SK-N-SH (cell line): ENCODE measurements at regions of chr7 and their contacts with region 1.

Region 1: DNA sequence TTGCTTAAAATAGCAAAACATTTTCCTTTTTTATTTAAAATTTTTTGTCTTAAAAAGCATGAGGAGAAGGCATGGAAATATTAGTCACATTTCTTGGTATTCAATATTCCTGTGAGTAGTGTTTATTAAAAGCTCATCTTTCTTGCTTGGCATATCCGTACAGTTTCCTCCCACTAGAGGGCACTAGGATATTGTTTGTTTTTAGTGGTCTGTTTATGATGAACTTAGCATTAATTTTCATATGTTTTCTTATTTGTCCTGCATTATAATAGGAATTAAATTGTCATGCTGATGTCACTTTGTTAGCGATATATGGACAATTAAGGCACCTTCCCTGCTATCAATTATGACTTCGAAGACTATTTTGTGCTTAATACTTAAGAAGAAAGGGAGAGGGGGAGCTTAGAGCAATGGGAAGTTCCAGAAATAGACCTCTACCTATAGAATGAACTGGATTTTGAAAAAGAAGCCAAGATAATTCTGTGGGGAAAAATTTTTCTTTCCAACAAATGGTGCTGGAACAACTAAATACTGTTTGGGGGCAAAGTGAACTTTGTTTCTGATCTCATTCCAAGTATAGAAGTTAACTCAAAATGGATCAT is 91.0 kb upstream of the STRIP2 start:
- DNase-seq: peak; percentile 64
- H3K4me3 ChIP-seq: no peak overlapping the region
- H3K27ac ChIP-seq: no peak overlapping the region
- H3K4me1 ChIP-seq: peaks cover 0 to 6% of the 10 kb centered on the region in 2 experiments; a peak in 1 of 4 replicates
- H3K27me3 ChIP-seq: no peaks in the 10 kb centered on the region
- CTCF ChIP-seq: peak; percentile 98
- EP300 ChIP-seq: no peak
- RAD21 ChIP-seq: peak; percentile 81

Region 2: GRCh38 chr7:128849804-128850490 is 493.3 kb before region 1 on chr7:
- CTCF ChIA-PET with region 1: no interaction called
- POLR2A ChIA-PET with region 1: no interaction called
- DNase-seq: no peak
- H3K4me3 ChIP-seq: no peak overlapping the region
- H3K27ac ChIP-seq: no peak overlapping the region
- H3K4me1 ChIP-seq: no peaks in the 10 kb centered on the region
- H3K27me3 ChIP-seq: no peaks in the 10 kb centered on the region
- CTCF ChIP-seq: no peak
- EP300 ChIP-seq: no peak
- RAD21 ChIP-seq: no peak

Region 3: DNA sequence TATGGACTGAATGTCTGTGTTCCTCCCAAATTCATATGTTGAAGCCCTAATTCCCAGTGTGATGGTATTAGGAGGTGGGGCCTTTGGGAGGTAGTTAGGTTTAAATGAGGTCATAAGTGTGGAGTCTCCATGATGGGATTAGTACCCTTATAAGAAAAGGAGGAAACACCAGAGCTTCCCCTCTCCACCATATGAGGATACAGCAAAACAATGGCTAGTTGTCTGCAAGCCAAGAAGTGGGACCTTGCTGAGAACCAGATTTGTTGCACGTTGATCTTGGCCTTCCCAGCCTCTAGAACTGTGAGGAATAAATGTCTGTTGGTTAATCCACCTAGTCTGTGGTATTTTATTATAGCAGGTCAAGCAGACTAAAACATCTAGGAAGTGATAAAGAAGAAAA is 16.1 kb before region 1 on chr7:
- CTCF ChIA-PET with region 1: interaction called, 45 read pairs
- POLR2A ChIA-PET with region 1: no interaction called
- DNase-seq: no peak
- H3K4me3 ChIP-seq: no peak overlapping the region
- H3K27ac ChIP-seq: no peak overlapping the region
- H3K4me1 ChIP-seq: no peaks in the 10 kb centered on the region
- H3K27me3 ChIP-seq: no peaks in the 10 kb centered on the region
- CTCF ChIP-seq: no peak
- EP300 ChIP-seq: no peak
- RAD21 ChIP-seq: no peak

Region 4: GRCh38 chr7:129359638-129360037 is 16.4 kb after region 1 on chr7:
- CTCF ChIA-PET with region 1: interaction called, 57 read pairs
- POLR2A ChIA-PET with region 1: no interaction called
- DNase-seq: no peak
- H3K4me3 ChIP-seq: no peak overlapping the region
- H3K27ac ChIP-seq: no peak overlapping the region
- H3K4me1 ChIP-seq: no peaks in the 10 kb centered on the region
- H3K27me3 ChIP-seq: no peaks in the 10 kb centered on the region
- CTCF ChIP-seq: no peak
- EP300 ChIP-seq: no peak
- RAD21 ChIP-seq: no peak

Region 5: GRCh38 chr7:129389829-129390228 is 46.6 kb after region 1 on chr7:
- CTCF ChIA-PET with region 1: interaction called, 17 read pairs
- POLR2A ChIA-PET with region 1: no interaction called
- DNase-seq: no peak
- H3K4me3 ChIP-seq: no peak overlapping the region
- H3K27ac ChIP-seq: no peak overlapping the region
- H3K4me1 ChIP-seq: no peaks in the 10 kb centered on the region; a peak in 1 of 4 replicates
- H3K27me3 ChIP-seq: no peaks in the 10 kb centered on the region
- CTCF ChIP-seq: no peak; the same call in none of the 2 replicates
- EP300 ChIP-seq: no peak
- RAD21 ChIP-seq: no peak

Region 6: DNA sequence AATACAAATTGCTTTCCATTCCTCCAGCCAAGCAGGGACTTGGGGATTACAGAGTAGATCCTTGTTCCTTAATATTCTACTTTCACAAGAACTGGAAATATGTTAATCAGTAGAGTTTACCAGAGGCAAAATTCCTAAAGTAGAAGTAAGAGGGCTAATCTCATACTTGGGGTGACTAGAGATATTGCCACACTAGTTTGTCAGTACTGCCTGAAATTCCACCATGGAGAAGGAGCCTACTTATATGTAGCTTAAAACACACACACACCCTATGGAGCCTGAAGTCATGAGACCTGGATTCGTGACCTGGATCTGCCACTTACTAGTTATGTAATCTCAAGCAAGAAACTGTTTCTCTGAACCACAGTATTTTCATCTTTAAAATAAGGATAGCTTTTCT is 124.9 kb after region 1 on chr7:
- CTCF ChIA-PET with region 1: interaction called, 153 read pairs
- POLR2A ChIA-PET with region 1: no interaction called
- DNase-seq: no peak
- H3K4me3 ChIP-seq: no peak overlapping the region
- H3K27ac ChIP-seq: no peak overlapping the region
- H3K4me1 ChIP-seq: peaks cover 0 to 23% of the 10 kb centered on the region in 2 experiments; a peak in 2 of 4 replicates
- H3K27me3 ChIP-seq: no peaks in the 10 kb centered on the region
- CTCF ChIP-seq: no peak
- EP300 ChIP-seq: no peak
- RAD21 ChIP-seq: no peak

Region 7: DNA sequence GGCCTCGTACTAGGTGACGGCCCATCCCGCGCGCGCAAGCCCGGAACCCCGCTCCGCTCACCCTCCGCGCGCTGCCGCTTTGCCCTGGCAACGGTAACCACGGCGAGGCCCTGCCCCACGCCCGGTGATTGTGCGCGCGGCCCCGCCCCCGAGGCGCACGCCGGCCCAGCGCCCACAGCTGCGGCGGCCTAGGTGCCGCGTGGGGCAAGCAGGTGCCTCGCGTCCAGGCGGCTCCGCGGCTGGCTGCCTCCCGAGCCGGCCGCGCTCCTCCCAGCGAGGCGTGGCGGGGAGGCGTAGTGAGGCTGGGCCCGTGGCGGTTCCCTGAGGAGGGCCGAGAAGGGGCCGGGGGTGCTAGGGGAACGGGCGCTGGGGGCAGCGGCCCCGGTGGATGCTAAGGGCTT is 159.2 kb after region 1 on chr7 and contains the start of gene SMKR1:
- CTCF ChIA-PET with region 1: interaction called, 19 read pairs
- POLR2A ChIA-PET with region 1: no interaction called
- DNase-seq: peak; percentile 99
- H3K4me3 ChIP-seq: peak within 1 kb of the TSS; percentile 54 to 73
- H3K27ac ChIP-seq: no peak within 1 kb of the TSS; a peak in 1 of 4 replicates
- H3K4me1 ChIP-seq: peaks cover 0 to 7% of the 10 kb centered on the region in 2 experiments; a peak in 1 of 4 replicates
- H3K27me3 ChIP-seq: no peaks in the 10 kb centered on the region
- CTCF ChIP-seq: no peak
- EP300 ChIP-seq: no peak
- RAD21 ChIP-seq: no peak
- polyA plus RNA-seq, gene SMKR1: 5.8 and 8.1 TPM in 2 replicates

Region 8: DNA sequence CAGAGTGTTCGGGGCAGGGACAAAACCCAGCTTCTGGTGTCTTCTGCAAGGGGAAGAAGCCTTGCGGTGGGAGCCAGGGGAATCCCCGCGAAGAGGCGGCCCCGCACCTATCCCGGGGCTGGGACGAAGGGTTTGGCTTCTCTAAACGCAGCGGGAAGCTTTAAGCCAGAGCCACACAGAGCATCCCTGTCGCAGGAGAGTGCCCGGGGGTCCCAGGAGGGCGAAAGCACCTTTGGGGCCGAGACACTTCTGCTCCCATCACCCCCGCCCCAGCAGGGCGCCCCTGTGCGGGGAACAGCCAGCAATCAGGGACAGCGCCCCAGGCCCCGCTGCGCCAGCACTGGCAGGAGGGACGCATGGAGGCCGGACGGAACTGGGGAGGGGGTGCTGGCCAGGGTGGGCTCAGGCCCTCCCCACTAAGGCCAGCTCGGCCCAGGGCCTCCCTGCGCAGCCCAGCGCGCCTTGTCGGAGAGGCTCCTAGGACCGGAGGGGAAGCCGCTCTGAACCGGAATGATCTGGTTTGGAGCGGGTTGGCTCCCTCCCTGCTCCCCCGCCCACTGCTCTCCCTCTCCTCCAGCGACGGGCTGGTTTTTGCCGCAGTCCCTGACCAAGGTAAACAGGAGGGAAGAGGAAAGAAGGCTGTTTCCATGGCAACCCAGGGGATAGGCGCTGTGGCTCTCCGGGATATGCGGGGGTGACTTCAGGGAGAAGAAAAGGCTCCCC is 798.1 kb after region 1 on chr7:
- CTCF ChIA-PET with region 1: no interaction called
- POLR2A ChIA-PET with region 1: no interaction called
- DNase-seq: peak; percentile 95
- H3K4me3 ChIP-seq: peak overlapping the region in 1 of 2 experiments; percentile 19; a peak in 1 of 4 replicates
- H3K27ac ChIP-seq: peak overlapping the region in 1 of 2 experiments; percentile 12; a peak in 1 of 4 replicates
- H3K4me1 ChIP-seq: peaks cover 5 to 15% of the 10 kb centered on the region in 2 experiments; a peak in 2 of 4 replicates
- H3K27me3 ChIP-seq: no peaks in the 10 kb centered on the region
- CTCF ChIP-seq: no peak
- EP300 ChIP-seq: no peak
- RAD21 ChIP-seq: no peak